ENCODE measurements at regions of chr10 and their contacts with region 1.

Region 1: DNA sequence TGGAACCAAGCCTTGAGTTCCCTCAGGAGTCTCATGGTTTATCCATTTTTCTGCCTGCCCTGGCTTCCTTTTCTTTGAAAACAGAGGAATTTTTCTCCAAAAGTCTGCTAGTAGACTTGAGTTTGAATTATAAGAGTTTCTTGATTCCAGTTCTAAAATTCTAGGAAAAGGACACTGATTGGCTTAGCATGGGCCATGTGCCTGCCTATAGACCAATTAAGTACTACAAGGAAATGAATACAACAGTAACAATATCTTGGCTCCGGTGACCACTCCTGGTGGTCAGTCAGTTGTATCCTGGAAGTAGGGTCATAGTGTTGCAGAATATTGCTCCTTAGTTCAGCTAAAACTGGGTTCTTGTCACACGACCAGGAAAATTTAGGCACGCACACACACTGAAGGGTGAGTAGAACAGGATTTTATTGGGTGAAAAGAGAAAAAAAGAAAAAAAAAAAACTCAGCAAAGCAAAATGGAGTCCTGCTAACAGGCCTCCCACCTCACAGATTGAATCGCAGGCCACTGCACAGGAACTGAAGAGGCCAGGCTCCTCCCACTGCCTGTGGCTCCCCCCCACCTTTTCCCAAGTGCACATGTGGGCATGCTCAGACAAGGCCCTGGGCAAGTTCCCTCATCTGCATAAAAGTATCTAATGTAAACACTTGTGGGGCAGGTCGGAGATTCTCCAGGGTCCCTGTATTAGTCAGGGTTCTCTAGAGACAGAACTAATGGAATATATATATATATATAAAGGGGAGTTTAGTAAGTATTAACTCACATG is 155.1 kb downstream of the LYZL1 start:
- DNase-seq: no peak
- H3K4me3 Mint-ChIP-seq: no peak overlapping the region
- H3K27ac Mint-ChIP-seq: no peak overlapping the region
- H3K4me1 Mint-ChIP-seq: peaks cover 13% of the 10 kb centered on the region
- H3K27me3 Mint-ChIP-seq: no peaks in the 10 kb centered on the region

Region 2: GRCh38 chr10:28459453-28460144 is 984.3 kb before region 1 on chr10:
- intact Hi-C with region 1: no loop called
- DNase-seq: no peak
- H3K4me3 Mint-ChIP-seq: no peak overlapping the region
- H3K27ac Mint-ChIP-seq: no peak overlapping the region
- H3K4me1 Mint-ChIP-seq: no peaks in the 10 kb centered on the region
- H3K27me3 Mint-ChIP-seq: peaks cover 19% of the 10 kb centered on the region

Region 3: GRCh38 chr10:29356786-29357330 is 87.1 kb before region 1 on chr10:
- intact Hi-C with region 1: no loop called
- DNase-seq: no peak
- H3K4me3 Mint-ChIP-seq: no peak overlapping the region
- H3K27ac Mint-ChIP-seq: no peak overlapping the region
- H3K4me1 Mint-ChIP-seq: no peaks in the 10 kb centered on the region
- H3K27me3 Mint-ChIP-seq: peaks cover 3% of the 10 kb centered on the region

Region 4: GRCh38 chr10:29377333-29377961 is 66.5 kb before region 1 on chr10:
- intact Hi-C with region 1: loop called (anchors 2 kb)
- DNase-seq: peak; percentile 60
- H3K4me3 Mint-ChIP-seq: no peak overlapping the region
- H3K27ac Mint-ChIP-seq: no peak overlapping the region
- H3K4me1 Mint-ChIP-seq: peaks cover 6% of the 10 kb centered on the region
- H3K27me3 Mint-ChIP-seq: peaks cover 9% of the 10 kb centered on the region

Region 5: GRCh38 chr10:29386342-29386999 is 57.5 kb before region 1 on chr10:
- intact Hi-C with region 1: loop called (anchors 1 kb)
- DNase-seq: peak; percentile 70
- H3K4me3 Mint-ChIP-seq: no peak overlapping the region
- H3K27ac Mint-ChIP-seq: no peak overlapping the region
- H3K4me1 Mint-ChIP-seq: peaks cover 9% of the 10 kb centered on the region
- H3K27me3 Mint-ChIP-seq: peaks cover 23% of the 10 kb centered on the region

Region 6: DNA sequence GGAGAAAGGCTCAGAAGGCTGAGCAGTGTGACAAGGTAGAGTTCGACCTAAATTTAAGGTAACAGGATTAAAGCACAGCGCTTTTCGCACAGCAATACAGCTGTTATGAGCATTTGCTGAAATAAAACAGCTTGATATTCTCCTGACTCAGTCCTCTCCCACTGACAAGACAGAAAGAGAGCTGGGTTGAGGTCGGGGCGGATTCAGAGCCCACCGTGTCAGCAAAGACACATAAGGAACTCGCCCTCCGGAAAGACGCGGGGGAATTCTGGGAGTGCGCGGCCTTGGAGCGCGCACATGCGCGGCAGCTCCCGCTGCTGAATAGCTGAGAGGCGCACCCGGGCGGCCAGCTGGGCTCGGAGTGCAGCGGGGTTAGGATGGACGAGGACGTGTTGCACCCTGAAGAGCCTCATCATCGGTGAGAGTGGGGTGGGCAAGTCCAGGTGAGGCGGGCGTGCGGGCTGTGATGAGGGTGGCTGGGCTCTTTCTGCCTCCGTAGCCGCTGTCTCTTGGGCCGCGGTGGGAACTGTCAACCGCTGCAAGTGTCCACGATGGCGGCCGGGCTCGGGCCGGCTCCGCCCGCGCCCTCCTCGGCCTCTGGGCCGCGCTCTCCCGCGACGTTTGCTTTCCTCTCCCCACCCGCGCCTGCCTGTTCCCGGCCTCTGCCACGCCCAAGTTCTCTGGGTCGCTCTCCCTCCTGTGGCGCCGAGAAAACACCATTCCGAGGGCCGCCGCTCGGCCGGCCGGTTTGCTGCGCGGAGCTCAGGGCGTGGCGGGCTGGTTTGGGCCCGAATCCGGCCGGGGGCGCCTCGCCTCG is 34.5 kb before region 1 on chr10:
- intact Hi-C with region 1: loop called (anchors 5 kb)
- DNase-seq: peak; percentile 84
- H3K4me3 Mint-ChIP-seq: peak overlapping the region; percentile 98
- H3K27ac Mint-ChIP-seq: peak overlapping the region; percentile 89
- H3K4me1 Mint-ChIP-seq: peaks cover 24% of the 10 kb centered on the region
- H3K27me3 Mint-ChIP-seq: no peaks in the 10 kb centered on the region

Region 7: DNA sequence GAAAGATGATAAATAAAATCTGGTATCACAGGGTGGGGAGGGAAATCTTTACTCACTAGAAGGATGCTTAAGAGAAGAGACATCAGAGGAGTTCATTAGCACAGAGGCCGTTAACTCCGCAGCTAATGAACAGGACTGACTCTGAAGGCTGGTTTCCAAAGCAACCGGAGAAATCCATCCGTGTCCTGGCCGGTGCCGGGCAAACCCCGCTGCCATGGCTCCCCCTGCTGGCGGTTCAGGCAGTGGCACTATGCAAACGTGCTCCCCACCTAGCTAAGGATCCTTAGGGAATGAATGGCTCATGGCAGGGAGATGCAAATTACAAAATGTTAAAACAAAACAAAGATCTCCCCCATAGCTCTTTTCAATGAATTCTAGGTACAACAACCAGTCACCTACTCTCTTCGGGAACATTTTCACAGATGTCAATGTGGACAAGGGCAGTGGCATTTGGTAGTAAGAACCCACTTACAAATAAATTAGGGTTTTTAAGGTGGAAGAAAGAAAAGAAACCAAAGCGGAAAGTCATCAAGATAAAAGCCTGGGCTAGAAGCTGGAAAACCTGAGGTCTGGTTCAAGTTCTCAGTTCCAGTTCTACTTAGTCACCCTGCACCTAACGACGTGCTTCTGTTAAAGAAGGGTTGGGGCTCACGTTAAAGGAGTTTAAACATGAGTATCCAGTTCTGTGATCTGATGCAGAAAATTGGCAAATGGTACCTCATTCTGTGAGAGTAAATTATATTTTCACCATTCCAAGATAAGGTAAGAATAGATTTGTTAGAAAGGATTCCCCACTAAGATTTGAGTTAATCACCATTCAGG is 52.6 kb after region 1 on chr10:
- intact Hi-C with region 1: loop called (anchors 1 kb)
- DNase-seq: peak; percentile 89
- H3K4me3 Mint-ChIP-seq: no peak overlapping the region
- H3K27ac Mint-ChIP-seq: no peak overlapping the region
- H3K4me1 Mint-ChIP-seq: peaks cover 1% of the 10 kb centered on the region
- H3K27me3 Mint-ChIP-seq: no peaks in the 10 kb centered on the region